Naive thymus-derived CD4-positive, alpha-beta T cell (primary cell): ENCODE measurements at regions of chr3 and their contacts with region 1.

Region 1: GRCh38 chr3:42443819-42444436 is 33.5 kb upstream of the LYZL4 start:
- DNase-seq: peak; percentile 46 to 78 (median 73)
- ATAC-seq: peak; percentile 88
- H3K4me3 ChIP-seq: no peak overlapping the region
- H3K4me3 Mint-ChIP-seq: no peak overlapping the region
- H3K27ac ChIP-seq: no peak overlapping the region
- H3K27ac Mint-ChIP-seq: no peak overlapping the region
- H3K4me1 ChIP-seq: no peaks in the 10 kb centered on the region
- H3K4me1 Mint-ChIP-seq: peaks cover 0 to 3% (median 0%) of the 10 kb centered on the region in 7 donors
- H3K27me3 ChIP-seq: no peaks in the 10 kb centered on the region
- H3K27me3 Mint-ChIP-seq: peaks cover 0 to 16% (median 4%) of the 10 kb centered on the region in 5 donors

Region 2: DNA sequence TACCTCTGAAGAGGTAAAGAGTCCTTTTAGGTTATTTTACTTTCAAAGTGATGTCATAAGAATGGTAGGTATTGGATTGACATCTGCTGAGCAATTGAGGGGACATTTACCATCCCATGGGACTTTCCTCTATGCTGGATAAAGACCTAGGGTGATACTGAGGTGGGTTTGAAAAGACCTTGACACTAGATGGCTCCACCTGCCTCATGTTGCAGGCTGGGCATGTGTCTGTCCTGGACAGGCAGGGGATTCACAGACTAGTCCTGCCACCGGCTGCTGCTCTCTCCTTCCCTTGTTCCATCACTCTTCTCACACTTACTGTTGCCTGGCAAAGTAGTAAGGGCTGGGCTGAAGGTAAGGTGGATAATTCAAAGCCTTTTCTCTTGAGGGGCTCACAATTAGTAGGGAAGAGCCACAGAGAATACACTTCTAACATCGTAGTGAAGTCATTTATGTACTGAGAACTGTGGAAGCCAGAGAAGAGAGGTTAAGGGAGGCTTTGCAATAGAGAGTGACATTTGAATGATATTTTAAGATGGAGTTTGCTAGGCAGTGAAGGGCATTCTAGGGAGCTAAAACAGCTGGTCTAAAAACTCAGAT is 325.1 kb before region 1 on chr3:
- CTCF ChIA-PET with region 1: interaction called, 3 read pairs
- POLR2A ChIA-PET with region 1: no interaction called
- intact Hi-C with region 1: loop called in 1 of 2 experiments (anchors 1 kb)
- DNase-seq: peak in 1 of 9 donors; percentile 11
- ATAC-seq: peak; percentile 27
- H3K4me3 ChIP-seq: no peak overlapping the region
- H3K4me3 Mint-ChIP-seq: no peak overlapping the region
- H3K27ac ChIP-seq: no peak overlapping the region
- H3K27ac Mint-ChIP-seq: peak overlapping the region in 3 of 9 donors; percentile 7 to 60 (median 51)
- H3K4me1 ChIP-seq: no peaks in the 10 kb centered on the region
- H3K4me1 Mint-ChIP-seq: peaks cover 6 to 36% (median 19%) of the 10 kb centered on the region in 7 donors
- H3K27me3 ChIP-seq: no peaks in the 10 kb centered on the region
- H3K27me3 Mint-ChIP-seq: no peaks in the 10 kb centered on the region

Region 3: GRCh38 chr3:42229942-42230688 is 213.8 kb before region 1 on chr3:
- CTCF ChIA-PET with region 1: interaction called, 5 read pairs
- POLR2A ChIA-PET with region 1: no interaction called
- intact Hi-C with region 1: loop called in 1 of 2 experiments (anchors 5 kb)
- DNase-seq: no peak
- ATAC-seq: no peak
- H3K4me3 ChIP-seq: no peak overlapping the region
- H3K4me3 Mint-ChIP-seq: no peak overlapping the region
- H3K27ac ChIP-seq: no peak overlapping the region
- H3K27ac Mint-ChIP-seq: no peak overlapping the region
- H3K4me1 ChIP-seq: no peaks in the 10 kb centered on the region
- H3K4me1 Mint-ChIP-seq: peaks cover 0 to 3% (median 0%) of the 10 kb centered on the region in 7 donors
- H3K27me3 ChIP-seq: no peaks in the 10 kb centered on the region
- H3K27me3 Mint-ChIP-seq: peaks cover 11 to 20% (median 13%) of the 10 kb centered on the region in 5 donors

Region 4: GRCh38 chr3:42387802-42388651 is 55.9 kb before region 1 on chr3:
- CTCF ChIA-PET with region 1: interaction called, 5 read pairs
- POLR2A ChIA-PET with region 1: no interaction called
- intact Hi-C with region 1: loop called in 1 of 2 experiments (anchors 5 kb)
- DNase-seq: peak in 7 of 9 donors; percentile 33 to 72 (median 48)
- ATAC-seq: peak; percentile 78
- H3K4me3 ChIP-seq: no peak overlapping the region
- H3K4me3 Mint-ChIP-seq: peak overlapping the region; percentile 33 to 86 (median 72)
- H3K27ac ChIP-seq: peak overlapping the region; percentile 59
- H3K27ac Mint-ChIP-seq: peak overlapping the region; percentile 65 to 99 (median 96)
- H3K4me1 ChIP-seq: peaks cover 0 to 28% of the 10 kb centered on the region in 2 donors
- H3K4me1 Mint-ChIP-seq: peaks cover 19 to 57% (median 24%) of the 10 kb centered on the region in 7 donors
- H3K27me3 ChIP-seq: no peaks in the 10 kb centered on the region
- H3K27me3 Mint-ChIP-seq: peaks cover 0 to 10% (median 0%) of the 10 kb centered on the region in 5 donors